ENCODE measurements at regions of chr10 and their contacts with region 1.

Region 1: GRCh38 chr10:4767033-4767814 is 58.8 kb upstream of the AKR1E2 start:
- DNase-seq: peak in 1 of 2 donors; percentile 60
- ATAC-seq: no peak
- H3K4me3 ChIP-seq: no peak overlapping the region
- H3K4me3 Mint-ChIP-seq: no peak overlapping the region
- H3K27ac ChIP-seq: no peak overlapping the region
- H3K27ac Mint-ChIP-seq: no peak overlapping the region
- H3K4me1 ChIP-seq: no peaks in the 10 kb centered on the region
- H3K4me1 Mint-ChIP-seq: no peaks in the 10 kb centered on the region
- H3K27me3 ChIP-seq: no peaks in the 10 kb centered on the region
- H3K27me3 Mint-ChIP-seq: peaks cover 10 to 52% of the 10 kb centered on the region in 2 donors
- CTCF ChIP-seq: peak; percentile 24

Region 2: GRCh38 chr10:3197348-3198003 is 1569.7 kb before region 1 on chr10:
- intact Hi-C with region 1: loop called (anchors 2 kb)
- DNase-seq: peak; percentile 74 to 77
- ATAC-seq: peak; percentile 76 to 89 (median 79)
- H3K4me3 ChIP-seq: peak overlapping the region; percentile 20
- H3K4me3 Mint-ChIP-seq: peak overlapping the region; percentile 67
- H3K27ac ChIP-seq: no peak overlapping the region
- H3K27ac Mint-ChIP-seq: peak overlapping the region in 1 of 2 donors; percentile 70
- H3K4me1 ChIP-seq: peaks cover 16% of the 10 kb centered on the region
- H3K4me1 Mint-ChIP-seq: peaks cover 22 to 33% of the 10 kb centered on the region in 2 donors
- H3K27me3 ChIP-seq: peaks cover 15% of the 10 kb centered on the region
- H3K27me3 Mint-ChIP-seq: peaks cover 61 to 78% of the 10 kb centered on the region in 2 donors
- CTCF ChIP-seq: peak; percentile 65

Region 3: DNA sequence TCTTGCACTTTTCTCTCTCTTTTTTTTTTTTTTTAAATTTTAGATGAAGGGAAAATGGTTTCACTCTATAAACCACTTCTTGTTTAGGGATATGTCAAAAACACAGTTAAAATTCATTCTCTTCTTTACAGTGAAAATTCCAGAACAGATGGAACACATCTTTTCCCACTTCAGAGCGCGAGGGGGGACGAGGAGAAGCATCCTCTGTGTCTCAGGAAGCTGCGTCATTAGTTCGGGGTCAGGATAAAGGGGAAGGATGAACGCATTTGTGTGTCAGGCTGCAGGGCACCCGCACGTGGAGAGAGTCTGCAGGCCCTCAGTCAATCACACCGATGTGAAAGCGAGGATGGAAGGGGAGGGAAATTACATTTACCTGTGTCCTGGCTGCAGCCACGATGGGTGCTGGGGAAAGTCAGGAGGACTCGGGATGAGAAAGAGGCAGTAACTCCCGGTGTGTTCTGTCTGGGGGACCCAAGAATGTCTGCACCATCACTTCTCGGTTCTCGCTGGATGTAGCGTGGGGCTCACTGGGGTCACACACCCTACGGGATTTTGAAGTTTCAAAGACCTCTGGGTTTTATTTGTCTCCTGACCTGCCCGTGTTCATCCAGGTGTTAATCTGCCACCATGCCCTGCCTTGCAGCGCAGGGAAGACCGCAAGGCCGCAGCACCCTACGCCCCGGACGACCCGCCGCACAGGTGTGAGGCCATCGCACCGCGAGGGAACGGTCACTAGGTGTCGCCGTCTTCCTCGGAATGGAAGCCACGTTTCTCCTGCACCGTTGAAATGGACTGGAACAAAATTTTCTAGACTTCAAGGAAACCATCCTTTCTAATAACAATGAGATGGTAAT is 1527.9 kb before region 1 on chr10:
- intact Hi-C with region 1: loop called (anchors 2 kb)
- DNase-seq: peak; percentile 55 to 83
- ATAC-seq: peak; percentile 70 to 90 (median 84)
- H3K4me3 ChIP-seq: no peak overlapping the region
- H3K4me3 Mint-ChIP-seq: no peak overlapping the region
- H3K27ac ChIP-seq: no peak overlapping the region
- H3K27ac Mint-ChIP-seq: no peak overlapping the region
- H3K4me1 ChIP-seq: peaks cover 9% of the 10 kb centered on the region
- H3K4me1 Mint-ChIP-seq: peaks cover 0 to 5% of the 10 kb centered on the region in 2 donors
- H3K27me3 ChIP-seq: peaks cover 5% of the 10 kb centered on the region
- H3K27me3 Mint-ChIP-seq: peaks cover 9 to 18% of the 10 kb centered on the region in 2 donors
- CTCF ChIP-seq: peak; percentile 78

Region 4: DNA sequence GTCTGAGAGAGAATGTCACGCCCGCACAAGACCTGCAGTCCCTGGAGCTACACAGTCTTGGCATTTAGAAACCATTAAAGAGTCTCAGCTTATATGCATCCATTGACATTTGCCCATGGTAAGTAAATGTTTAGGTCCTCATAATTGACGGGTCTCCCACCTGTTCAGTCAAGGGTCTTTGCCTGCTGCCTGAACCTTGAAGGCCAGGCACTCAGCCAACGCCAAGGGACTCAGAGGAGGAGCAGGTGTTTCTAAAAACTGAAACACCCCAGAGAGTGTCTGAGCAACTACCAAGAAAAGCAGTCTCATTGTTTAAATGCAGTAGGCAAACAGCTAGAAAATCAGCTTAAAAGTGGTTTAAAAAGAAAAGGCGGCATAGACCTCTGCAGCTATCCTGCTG is 205.9 kb before region 1 on chr10:
- intact Hi-C with region 1: no loop called
- DNase-seq: no peak
- ATAC-seq: no peak
- H3K4me3 ChIP-seq: no peak overlapping the region
- H3K4me3 Mint-ChIP-seq: no peak overlapping the region
- H3K27ac ChIP-seq: no peak overlapping the region
- H3K27ac Mint-ChIP-seq: no peak overlapping the region
- H3K4me1 ChIP-seq: no peaks in the 10 kb centered on the region
- H3K4me1 Mint-ChIP-seq: no peaks in the 10 kb centered on the region
- H3K27me3 ChIP-seq: no peaks in the 10 kb centered on the region
- H3K27me3 Mint-ChIP-seq: peaks cover 22 to 23% of the 10 kb centered on the region in 2 donors
- CTCF ChIP-seq: no peak